ENCODE measurements at regions of chr11 and their contacts with region 1.

Region 1: DNA sequence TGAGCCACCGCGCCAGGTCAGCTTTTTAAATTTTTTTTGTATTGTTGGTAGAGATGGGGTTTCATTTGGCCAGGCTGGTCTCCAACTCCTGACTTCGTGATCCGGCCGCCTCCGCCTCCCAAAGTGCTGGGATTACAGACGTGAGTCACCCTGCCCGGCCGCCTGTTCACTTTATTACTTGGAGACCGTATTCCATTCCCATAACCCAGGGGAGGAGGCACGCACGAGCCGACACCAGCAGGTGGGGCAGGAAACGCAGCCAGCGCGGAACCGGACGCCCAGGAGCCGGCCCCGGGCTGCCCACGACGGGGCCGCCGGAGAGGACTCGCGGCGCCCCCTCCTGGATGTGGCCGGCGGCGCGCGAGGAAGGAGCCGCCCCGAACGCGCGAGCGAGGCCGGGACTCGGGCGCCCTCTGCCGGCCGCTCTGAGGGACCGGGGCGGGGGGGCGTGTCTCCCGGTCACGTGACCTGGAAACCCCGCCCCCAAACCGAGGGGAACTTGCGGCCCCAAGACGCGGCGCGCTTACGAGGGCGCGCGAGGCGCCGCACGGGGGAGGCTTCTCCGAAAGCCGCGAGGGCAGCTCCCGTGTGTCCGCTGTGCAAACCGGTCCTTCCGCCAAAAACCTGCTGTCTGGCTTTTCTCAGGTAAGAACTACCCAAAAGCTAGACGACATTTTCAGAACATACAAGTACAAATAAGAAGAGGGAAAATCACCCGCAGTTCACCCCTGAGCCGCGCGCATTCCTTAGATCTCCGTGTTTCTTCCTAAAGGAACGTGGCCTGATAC is 11.6 kb upstream of the RNH1 start:
- DNase-seq: peak; percentile 87
- ATAC-seq: peak; percentile 99
- H3K4me3 ChIP-seq: peak overlapping the region; percentile 35 to 73
- H3K27ac ChIP-seq: peak overlapping the region; percentile 77
- H3K4me1 ChIP-seq: peaks cover 6% of the 10 kb centered on the region; the same call in 1 of the 2 replicates
- H3K27me3 ChIP-seq: no peaks in the 10 kb centered on the region
- CTCF ChIP-seq: peak; percentile 100

Region 2: GRCh38 chr11:720642-721246 is 202.1 kb after region 1 on chr11:
- CTCF ChIA-PET with region 1: interaction called, 11 read pairs
- POLR2A ChIA-PET with region 1: no interaction called
- in situ Hi-C with region 1: no loop called
- intact Hi-C with region 1: no loop called
- DNase-seq: no peak
- ATAC-seq: peak; percentile 54
- H3K4me3 ChIP-seq: no peak overlapping the region
- H3K27ac ChIP-seq: no peak overlapping the region
- H3K4me1 ChIP-seq: peaks cover 5% of the 10 kb centered on the region; the same call in 1 of the 2 replicates
- H3K27me3 ChIP-seq: no peaks in the 10 kb centered on the region
- CTCF ChIP-seq: no peak

Measured in Panc1 (cell line).